Uterus (tissue), 4 donors: ENCODE measurements at regions of chr16 and their contacts with region 1.

Region 1: GRCh38 chr16:51181503-51181811 is 30.4 kb upstream of the SALL1 start:
- DNase-seq: no peak
- H3K4me3 ChIP-seq: no peak overlapping the region
- H3K27ac ChIP-seq: no peak overlapping the region
- H3K4me1 ChIP-seq: peaks cover 0 to 4% of the 10 kb centered on the region in 2 donors
- H3K27me3 ChIP-seq: no peaks in the 10 kb centered on the region
- CTCF ChIP-seq: no peak
- POLR2A ChIP-seq: no peak

Region 2: GRCh38 chr16:51113236-51114125 is 68.0 kb before region 1 on chr16:
- intact Hi-C with region 1: loop called (anchors 2 kb)
- DNase-seq: no peak
- H3K4me3 ChIP-seq: no peak overlapping the region
- H3K27ac ChIP-seq: no peak overlapping the region
- H3K4me1 ChIP-seq: no peaks in the 10 kb centered on the region
- H3K27me3 ChIP-seq: no peaks in the 10 kb centered on the region
- CTCF ChIP-seq: no peak
- POLR2A ChIP-seq: no peak

Region 3: GRCh38 chr16:51129105-51129504 is 52.4 kb before region 1 on chr16:
- intact Hi-C with region 1: no loop called
- DNase-seq: no peak
- H3K4me3 ChIP-seq: no peak overlapping the region
- H3K27ac ChIP-seq: no peak overlapping the region
- H3K4me1 ChIP-seq: no peaks in the 10 kb centered on the region
- H3K27me3 ChIP-seq: no peaks in the 10 kb centered on the region
- CTCF ChIP-seq: no peak
- POLR2A ChIP-seq: no peak

Region 4: GRCh38 chr16:51321251-51321650 is 139.8 kb after region 1 on chr16:
- intact Hi-C with region 1: no loop called
- DNase-seq: no peak
- H3K4me3 ChIP-seq: no peak overlapping the region
- H3K27ac ChIP-seq: no peak overlapping the region
- H3K4me1 ChIP-seq: no peaks in the 10 kb centered on the region
- H3K27me3 ChIP-seq: no peaks in the 10 kb centered on the region
- CTCF ChIP-seq: no peak
- POLR2A ChIP-seq: no peak